ENCODE measurements at regions of chr12 and their contacts with region 1.

Region 1: DNA sequence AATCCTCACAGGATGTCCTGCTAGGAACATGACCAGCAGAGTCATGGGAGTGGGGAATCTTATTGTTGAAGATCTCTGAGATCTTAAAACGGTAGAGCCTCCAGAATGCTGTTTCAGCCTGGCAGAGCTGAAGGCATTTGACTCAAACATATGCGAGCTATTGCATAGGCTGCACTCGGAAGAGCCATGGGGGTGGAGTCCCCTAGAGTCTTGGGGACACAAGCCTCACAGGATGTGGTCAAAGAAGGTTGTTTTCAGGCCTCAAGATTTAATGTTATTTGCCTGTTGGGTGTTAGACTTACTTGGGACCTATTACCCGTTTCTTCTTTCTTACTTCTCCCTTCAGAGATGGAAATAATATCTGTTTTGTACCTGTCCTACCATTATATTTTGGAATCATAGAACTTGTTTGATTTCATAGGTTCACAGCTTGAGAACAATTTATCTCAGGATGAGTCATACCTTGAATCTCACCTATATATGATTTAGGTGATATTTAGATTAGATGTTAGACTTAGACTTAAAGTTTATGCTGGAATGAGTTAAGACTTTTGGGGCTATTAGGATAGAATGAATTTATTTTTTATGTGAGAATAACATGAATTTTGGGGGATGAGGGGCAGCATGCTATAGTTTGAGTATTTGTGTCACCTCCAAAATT is 172.2 kb upstream of the ATP2B1 start:
- DNase-seq: peak in 34 of 35 experiments; percentile 22 to 83 (median 58)
- ATAC-seq: peak; percentile 97 to 100 (median 99)
- H3K4me3 ChIP-seq: no peak overlapping the region
- H3K4me3 Mint-ChIP-seq: peak overlapping the region; percentile 47 to 71 (median 57)
- H3K27ac ChIP-seq: peak overlapping the region; percentile 90
- H3K27ac Mint-ChIP-seq: peak overlapping the region; percentile 97 to 98
- H3K4me1 ChIP-seq: peaks cover 17 to 37% of the 10 kb centered on the region in 2 experiments
- H3K4me1 Mint-ChIP-seq: peaks cover 54 to 65% (median 65%) of the 10 kb centered on the region in 3 donors
- H3K27me3 ChIP-seq: no peaks in the 10 kb centered on the region
- H3K27me3 Mint-ChIP-seq: no peaks in the 10 kb centered on the region

Region 2: DNA sequence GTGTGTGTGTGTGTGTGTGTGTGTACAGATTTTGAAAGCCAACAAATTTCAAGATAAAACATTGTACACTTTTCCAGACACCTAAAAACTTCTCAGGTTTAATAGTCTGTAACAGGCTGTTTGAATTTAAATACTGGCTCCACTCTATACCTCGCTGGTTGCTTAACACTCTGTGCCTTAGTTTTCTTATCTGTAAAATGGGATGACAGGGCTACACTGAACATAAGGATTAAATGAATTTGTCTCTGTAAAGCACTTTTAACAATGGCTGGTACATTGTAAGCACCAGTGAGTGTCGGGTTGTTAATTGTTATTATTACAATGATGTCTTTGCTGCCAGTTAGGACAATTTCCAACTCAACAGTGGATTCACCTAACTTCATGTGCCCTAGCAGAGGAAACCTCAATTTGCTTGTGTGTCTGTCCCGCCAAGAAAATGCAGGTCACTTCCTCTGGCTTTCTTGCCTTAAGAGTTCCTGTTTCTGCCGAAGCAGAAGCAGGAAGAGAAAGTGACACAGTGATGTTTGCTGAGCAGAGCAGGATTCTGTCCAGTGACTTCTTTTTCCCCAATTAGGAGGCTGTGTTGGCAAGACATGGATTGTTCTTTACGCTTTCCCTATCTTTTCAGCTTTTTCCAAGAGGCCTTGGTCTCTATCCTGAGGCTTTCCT is 18.2 kb before region 1 on chr12:
- CTCF ChIA-PET with region 1: interaction called in 1 of 2 experiments, 6 read pairs
- POLR2A ChIA-PET with region 1: interaction called, 3 to 20 read pairs
- DNase-seq: peak in 32 of 35 experiments; percentile 12 to 77 (median 41)
- ATAC-seq: peak; percentile 34 to 75 (median 64)
- H3K4me3 ChIP-seq: peak overlapping the region; percentile 26 to 35
- H3K4me3 Mint-ChIP-seq: peak overlapping the region; percentile 74 to 82 (median 80)
- H3K27ac ChIP-seq: peak overlapping the region; percentile 96
- H3K27ac Mint-ChIP-seq: peak overlapping the region; percentile 95 to 97
- H3K4me1 ChIP-seq: peaks cover 29 to 33% of the 10 kb centered on the region in 2 experiments
- H3K4me1 Mint-ChIP-seq: peaks cover 67 to 73% (median 70%) of the 10 kb centered on the region in 3 donors
- H3K27me3 ChIP-seq: no peaks in the 10 kb centered on the region
- H3K27me3 Mint-ChIP-seq: no peaks in the 10 kb centered on the region

Region 3: GRCh38 chr12:89971881-89972280 is 91.1 kb after region 1 on chr12:
- CTCF ChIA-PET with region 1: no interaction called
- POLR2A ChIA-PET with region 1: no interaction called
- DNase-seq: no peak
- ATAC-seq: no peak
- H3K4me3 ChIP-seq: no peak overlapping the region
- H3K4me3 Mint-ChIP-seq: no peak overlapping the region
- H3K27ac ChIP-seq: no peak overlapping the region
- H3K27ac Mint-ChIP-seq: no peak overlapping the region
- H3K4me1 ChIP-seq: no peaks in the 10 kb centered on the region
- H3K4me1 Mint-ChIP-seq: peaks cover 6 to 12% (median 8%) of the 10 kb centered on the region in 3 donors
- H3K27me3 ChIP-seq: no peaks in the 10 kb centered on the region
- H3K27me3 Mint-ChIP-seq: peaks cover 0 to 4% of the 10 kb centered on the region in 2 donors